Caco-2 (cell line): ENCODE measurements at regions of chr5 and their contacts with region 1.

Region 1: DNA sequence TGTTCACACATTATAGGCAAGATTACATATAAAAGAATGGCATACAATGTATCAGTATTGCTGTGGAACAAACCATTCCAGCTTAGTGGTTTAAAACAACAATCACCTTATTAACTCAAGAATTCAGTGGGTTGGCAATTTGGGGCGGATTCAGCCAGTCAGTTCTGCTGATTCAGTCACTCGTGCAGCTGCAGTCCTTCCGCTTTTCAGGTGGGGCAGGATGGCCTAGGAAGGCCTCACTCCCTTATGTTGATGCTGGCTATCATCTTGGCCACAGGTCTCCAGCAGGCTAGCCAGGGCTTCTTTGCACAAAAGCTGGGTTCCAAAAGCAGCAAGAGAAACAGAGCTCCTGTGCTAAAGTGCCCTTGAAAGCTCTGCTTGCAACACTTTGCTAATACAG is 150.6 kb downstream of the MCTP1 start:
- DNase-seq: no peak
- H3K4me3 ChIP-seq: no peak overlapping the region
- H3K4me3 Mint-ChIP-seq: no peak overlapping the region
- H3K27ac Mint-ChIP-seq: no peak overlapping the region
- H3K4me1 ChIP-seq: peaks cover 9% of the 10 kb centered on the region
- H3K4me1 Mint-ChIP-seq: peaks cover 7% of the 10 kb centered on the region
- H3K27me3 ChIP-seq: no peaks in the 10 kb centered on the region
- H3K27me3 Mint-ChIP-seq: no peaks in the 10 kb centered on the region
- CTCF ChIP-seq: no peak

Region 2: GRCh38 chr5:94775088-94775487 is 359.2 kb before region 1 on chr5:
- CTCF ChIA-PET with region 1: no interaction called
- POLR2A ChIA-PET with region 1: interaction called, 11 read pairs
- intact Hi-C with region 1: no loop called
- DNase-seq: no peak
- H3K4me3 ChIP-seq: no peak overlapping the region
- H3K4me3 Mint-ChIP-seq: no peak overlapping the region
- H3K27ac Mint-ChIP-seq: no peak overlapping the region
- H3K4me1 ChIP-seq: no peaks in the 10 kb centered on the region
- H3K4me1 Mint-ChIP-seq: peaks cover 6% of the 10 kb centered on the region
- H3K27me3 ChIP-seq: no peaks in the 10 kb centered on the region; the same call in 1 of the 2 replicates
- H3K27me3 Mint-ChIP-seq: peaks cover 20% of the 10 kb centered on the region
- CTCF ChIP-seq: no peak

Region 3: DNA sequence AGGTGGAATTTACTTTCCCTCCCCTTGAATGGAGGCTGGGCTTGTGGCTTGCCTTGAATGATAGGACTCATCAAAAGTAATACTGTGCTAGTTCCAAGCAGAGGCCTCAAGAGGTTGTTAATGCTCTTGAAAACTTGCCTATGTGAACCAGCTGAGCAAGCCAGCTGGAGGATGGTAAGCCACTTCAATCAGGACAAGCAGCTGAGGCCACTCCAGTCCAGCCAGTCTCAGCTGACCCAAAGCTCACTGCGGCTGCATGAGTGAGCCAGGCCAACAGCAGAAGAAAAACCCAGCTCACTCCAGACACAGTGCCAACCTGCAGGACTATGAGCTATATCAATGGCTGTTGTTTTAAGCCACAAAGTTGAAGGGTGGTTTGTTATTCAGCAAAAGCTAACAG is 32.2 kb before region 1 on chr5:
- CTCF ChIA-PET with region 1: no interaction called
- POLR2A ChIA-PET with region 1: no interaction called
- intact Hi-C with region 1: no loop called
- DNase-seq: no peak
- H3K4me3 ChIP-seq: no peak overlapping the region
- H3K4me3 Mint-ChIP-seq: no peak overlapping the region
- H3K27ac Mint-ChIP-seq: no peak overlapping the region
- H3K4me1 ChIP-seq: no peaks in the 10 kb centered on the region
- H3K4me1 Mint-ChIP-seq: no peaks in the 10 kb centered on the region
- H3K27me3 ChIP-seq: no peaks in the 10 kb centered on the region
- H3K27me3 Mint-ChIP-seq: no peaks in the 10 kb centered on the region
- CTCF ChIP-seq: no peak